ENCODE measurements at regions of chr11 and their contacts with region 1.

Region 1: DNA sequence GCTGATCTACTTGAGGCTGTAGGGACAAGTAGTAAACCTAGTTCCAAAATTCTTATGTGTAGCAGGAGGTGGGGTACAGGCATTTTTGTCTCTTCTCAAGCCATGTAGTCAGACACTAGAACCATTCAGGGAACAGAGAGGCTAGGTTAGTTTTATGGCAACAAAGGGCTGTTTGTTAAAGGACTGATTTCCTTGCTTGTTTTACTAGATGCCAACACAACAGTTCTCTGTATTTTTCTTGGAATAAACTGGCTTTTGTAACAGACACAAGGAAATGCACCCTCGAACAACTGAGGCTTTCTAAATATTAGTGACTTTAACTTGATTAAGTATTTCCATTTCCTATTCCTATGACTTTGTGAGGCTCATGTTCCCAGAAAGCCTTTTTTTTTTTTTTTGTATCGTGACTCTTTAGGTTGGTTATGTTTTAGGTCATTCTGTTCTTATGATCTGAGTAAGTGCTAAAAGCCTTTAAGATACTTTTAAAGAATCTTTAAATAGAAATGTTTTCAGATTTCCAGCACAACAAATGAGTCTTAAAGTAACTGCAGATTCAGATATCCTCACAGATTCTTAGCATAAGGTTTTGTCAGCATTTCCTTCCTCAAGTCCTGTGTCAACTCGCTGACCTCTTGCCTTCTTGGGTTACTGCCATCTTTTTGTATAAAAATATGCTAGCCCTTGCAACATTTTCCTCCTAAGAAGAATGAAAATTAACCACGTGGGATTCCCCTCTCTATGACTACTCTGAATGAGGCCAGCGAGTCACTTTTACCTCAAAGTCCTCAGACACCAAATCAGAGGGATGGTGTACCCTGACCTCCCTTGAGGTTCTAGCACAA is 92.5 kb downstream of the CCDC83 start:
- DNase-seq: no peak
- H3K4me3 Mint-ChIP-seq: peak overlapping the region; percentile 15
- H3K27ac Mint-ChIP-seq: peak overlapping the region; percentile 75
- H3K4me1 Mint-ChIP-seq: peaks cover 35% of the 10 kb centered on the region
- H3K27me3 Mint-ChIP-seq: no peaks in the 10 kb centered on the region

Region 2: GRCh38 chr11:86047275-86047991 is 99.8 kb after region 1 on chr11:
- intact Hi-C with region 1: loop called (anchors 2 kb)
- DNase-seq: no peak
- H3K4me3 Mint-ChIP-seq: peak overlapping the region; percentile 65
- H3K27ac Mint-ChIP-seq: peak overlapping the region; percentile 96
- H3K4me1 Mint-ChIP-seq: peaks cover 73% of the 10 kb centered on the region
- H3K27me3 Mint-ChIP-seq: no peaks in the 10 kb centered on the region